Ascending aorta (tissue), 2 donors: ENCODE measurements at regions of chr20 and their contacts with region 1.

Region 1: DNA sequence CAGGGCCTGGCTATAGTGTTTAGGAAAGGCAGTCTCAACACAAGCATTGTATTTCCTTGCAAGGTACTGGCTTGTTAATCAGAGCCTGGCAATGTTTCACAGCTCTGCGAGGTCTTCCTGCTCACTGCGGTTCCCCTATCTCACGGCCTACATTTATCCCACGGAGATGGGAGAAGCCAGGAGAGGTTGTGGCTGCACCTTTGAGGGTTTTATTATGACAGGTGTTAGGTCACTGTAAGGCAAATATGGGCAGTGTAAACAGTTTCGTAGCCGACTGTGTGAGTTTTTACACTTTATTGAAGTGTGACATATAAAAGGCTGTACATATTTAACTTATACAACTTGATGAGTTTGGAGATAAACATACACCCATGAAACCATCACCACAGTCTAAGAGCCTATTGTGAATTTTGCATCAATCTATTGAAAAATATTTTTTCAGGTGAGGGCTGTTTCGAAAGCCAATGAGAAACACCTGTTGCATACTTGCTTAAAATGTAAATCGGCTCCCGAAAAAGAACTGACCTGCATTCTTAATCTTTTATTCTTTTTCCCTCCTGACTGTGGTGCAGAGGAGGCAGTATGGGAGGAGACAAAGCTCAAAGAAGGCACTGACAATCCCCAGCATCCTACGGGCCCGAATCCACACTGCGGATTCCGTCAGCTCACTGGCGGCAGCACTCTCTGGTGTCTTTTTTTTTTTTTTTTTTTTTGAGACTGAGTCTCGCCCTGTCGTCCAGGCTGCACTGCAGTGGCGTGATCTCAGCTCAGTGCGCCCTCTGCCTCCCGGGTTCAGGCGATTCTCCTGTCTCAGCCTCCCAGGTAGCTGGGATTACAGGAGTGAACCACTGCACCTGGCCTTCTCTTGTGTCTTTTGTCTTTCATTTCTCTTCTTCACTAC is 7.5 kb upstream of the RBM38 start:
- DNase-seq: no peak
- H3K4me3 ChIP-seq: no peak overlapping the region
- H3K27ac ChIP-seq: no peak overlapping the region
- H3K4me1 ChIP-seq: no peaks in the 10 kb centered on the region
- H3K27me3 ChIP-seq: no peaks in the 10 kb centered on the region
- CTCF ChIP-seq: no peak

Region 2: DNA sequence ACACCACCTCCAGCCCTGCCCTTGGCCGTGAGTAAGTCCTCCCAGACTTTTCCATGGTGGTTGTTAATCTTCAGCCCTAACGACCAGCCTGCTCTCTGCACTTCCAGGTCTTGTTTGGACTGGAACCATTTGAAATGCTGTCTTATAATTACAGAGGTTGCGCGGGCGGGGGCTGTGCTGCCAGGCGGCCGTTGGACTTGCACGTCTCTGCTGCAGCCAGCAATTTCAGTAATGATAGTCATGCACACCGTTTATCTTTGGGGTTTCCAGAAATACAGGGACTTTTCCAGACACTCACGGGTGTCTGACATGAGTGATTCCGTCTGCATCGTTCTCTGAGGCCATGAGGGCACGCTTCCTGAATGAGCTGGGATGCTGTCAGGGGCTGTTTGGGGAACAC is 235.4 kb before region 1 on chr20:
- intact Hi-C with region 1: no loop called
- DNase-seq: no peak
- H3K4me3 ChIP-seq: no peak overlapping the region
- H3K27ac ChIP-seq: no peak overlapping the region
- H3K4me1 ChIP-seq: no peaks in the 10 kb centered on the region
- H3K27me3 ChIP-seq: no peaks in the 10 kb centered on the region
- CTCF ChIP-seq: no peak

Region 3: GRCh38 chr20:57432874-57433491 is 49.3 kb after region 1 on chr20:
- intact Hi-C with region 1: no loop called
- DNase-seq: peak in 1 of 2 donors; percentile 77
- H3K4me3 ChIP-seq: no peak overlapping the region
- H3K27ac ChIP-seq: peak overlapping the region in 1 of 2 donors; percentile 6
- H3K4me1 ChIP-seq: peaks cover 5 to 50% of the 10 kb centered on the region in 2 donors
- H3K27me3 ChIP-seq: no peaks in the 10 kb centered on the region
- CTCF ChIP-seq: no peak

Region 4: GRCh38 chr20:57498425-57499400 is 115.0 kb after region 1 on chr20:
- intact Hi-C with region 1: loop called (anchors 1 kb)
- DNase-seq: no peak
- H3K4me3 ChIP-seq: no peak overlapping the region
- H3K27ac ChIP-seq: no peak overlapping the region
- H3K4me1 ChIP-seq: peaks cover 4 to 9% of the 10 kb centered on the region in 2 donors
- H3K27me3 ChIP-seq: no peaks in the 10 kb centered on the region
- CTCF ChIP-seq: peak in 1 of 3 experiments; percentile 5